ENCODE measurements at regions of chr2 and their contacts with region 1.

Region 1: DNA sequence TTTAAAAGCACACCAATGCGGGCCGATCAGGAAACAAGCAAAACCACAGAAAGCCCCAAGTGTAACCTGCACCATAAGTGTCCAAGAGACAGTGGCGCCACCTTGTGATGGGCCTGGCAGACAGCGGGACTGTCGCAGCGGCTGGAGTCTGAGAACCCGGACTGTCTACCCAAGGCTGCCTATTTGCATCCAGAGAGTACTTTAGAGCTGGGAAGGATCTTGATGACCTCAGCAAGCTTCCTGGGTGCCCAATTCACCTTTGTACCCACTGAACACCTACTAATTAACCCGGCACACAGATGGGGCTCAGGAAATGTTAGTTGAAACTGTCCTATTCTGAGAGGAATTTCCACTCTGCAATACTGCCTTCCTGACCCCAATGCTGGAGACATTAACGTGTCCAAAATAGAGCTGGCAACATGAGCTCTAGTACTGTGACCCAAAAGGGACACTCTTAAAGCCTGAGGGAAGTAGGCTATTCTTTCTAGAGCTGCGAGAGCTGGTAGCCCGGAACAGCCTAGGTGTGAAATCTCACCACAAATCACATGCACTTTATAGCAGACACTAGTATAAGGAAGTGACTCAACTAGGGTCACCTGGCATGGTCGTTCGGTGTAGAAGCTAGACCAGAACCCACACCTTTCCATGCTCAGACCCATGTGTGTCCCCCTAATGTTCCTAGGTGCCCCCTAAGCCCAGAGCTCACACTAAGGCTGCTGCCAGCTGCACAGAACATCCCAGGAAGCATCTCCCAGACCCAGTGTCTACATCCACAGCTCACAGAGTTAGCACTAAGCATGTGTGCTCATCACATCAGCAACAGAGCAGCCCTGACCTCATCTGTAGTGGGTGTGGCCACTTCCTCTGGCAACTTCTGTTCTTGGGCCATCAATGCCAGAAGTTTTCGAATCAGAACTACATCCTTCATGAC is 25.4 kb downstream of the POLR1A start:
- DNase-seq: peak; percentile 96
- H3K4me3 ChIP-seq: peak overlapping the region in 1 of 8 donors; percentile 5
- H3K27ac ChIP-seq: peak overlapping the region; percentile 24 to 82 (median 66)
- H3K4me1 ChIP-seq: peaks cover 20 to 48% (median 37%) of the 10 kb centered on the region in 6 donors
- H3K27me3 ChIP-seq: no peaks in the 10 kb centered on the region
- CTCF ChIP-seq: peak; percentile 59 to 90 (median 85)
- POLR2A ChIP-seq: no peak

Region 2: GRCh38 chr2:85728883-85729824 is 351.1 kb before region 1 on chr2:
- intact Hi-C with region 1: loop called (anchors 10 kb)
- DNase-seq: peak; percentile 95
- H3K4me3 ChIP-seq: peak overlapping the region in 1 of 8 donors; percentile 17
- H3K27ac ChIP-seq: peak overlapping the region in 1 of 8 donors; percentile 24
- H3K4me1 ChIP-seq: peaks cover 3 to 34% (median 18%) of the 10 kb centered on the region in 6 donors
- H3K27me3 ChIP-seq: peaks cover 0 to 26% (median 0%) of the 10 kb centered on the region in 7 donors
- CTCF ChIP-seq: peak; percentile 65 to 95 (median 89)
- POLR2A ChIP-seq: no peak

Region 3: DNA sequence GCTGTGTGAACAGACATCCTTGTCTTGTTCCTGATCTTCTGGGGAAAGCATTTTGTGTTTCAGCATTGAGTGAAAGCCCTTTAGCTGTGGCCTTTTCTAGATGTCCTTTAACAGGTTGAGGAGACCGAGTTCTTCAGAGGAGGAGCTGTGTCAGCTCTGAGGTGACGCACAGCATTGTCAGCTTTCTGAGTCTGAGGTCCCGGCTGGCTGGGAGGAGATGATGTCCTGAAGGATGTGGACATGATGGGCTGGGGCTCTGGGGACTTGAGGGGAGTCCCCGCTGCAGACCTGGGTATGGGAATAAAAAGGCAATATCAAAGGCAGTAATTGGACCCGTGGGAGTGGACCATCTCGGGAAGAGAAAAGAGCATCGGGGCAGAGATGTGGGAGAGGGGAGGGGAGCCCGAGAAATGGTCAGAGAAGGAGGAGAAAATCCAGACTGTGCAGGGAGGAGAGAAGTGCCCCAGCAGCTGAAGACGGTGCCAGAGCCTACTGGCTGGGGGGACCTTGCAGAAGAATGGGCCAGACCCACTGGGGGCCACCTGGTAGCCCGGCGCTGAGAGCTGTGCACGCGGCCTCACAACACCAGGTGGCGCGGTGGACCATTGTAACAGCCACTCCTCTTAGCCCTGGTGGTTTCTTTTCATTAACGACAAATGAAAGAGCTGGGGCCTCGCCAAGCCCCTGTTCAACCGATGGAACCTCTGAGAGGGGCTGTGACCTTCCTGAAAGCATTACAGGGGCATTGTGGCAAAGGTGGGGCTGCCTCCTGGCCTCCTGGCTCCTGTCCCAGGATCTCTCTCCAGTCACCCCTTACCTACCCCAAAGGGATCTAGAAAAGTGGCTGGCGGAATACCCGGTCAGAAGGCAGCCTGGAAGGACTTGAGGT is 253.0 kb before region 1 on chr2:
- intact Hi-C with region 1: loop called (anchors 2 kb)
- DNase-seq: peak; percentile 93
- H3K4me3 ChIP-seq: peak overlapping the region in 1 of 8 donors; percentile 34
- H3K27ac ChIP-seq: peak overlapping the region in 1 of 8 donors; percentile 24
- H3K4me1 ChIP-seq: peaks cover 0 to 18% (median 8%) of the 10 kb centered on the region in 6 donors
- H3K27me3 ChIP-seq: peaks cover 0 to 5% (median 0%) of the 10 kb centered on the region in 7 donors
- CTCF ChIP-seq: peak; percentile 85 to 96 (median 93)
- POLR2A ChIP-seq: no peak

Region 4: DNA sequence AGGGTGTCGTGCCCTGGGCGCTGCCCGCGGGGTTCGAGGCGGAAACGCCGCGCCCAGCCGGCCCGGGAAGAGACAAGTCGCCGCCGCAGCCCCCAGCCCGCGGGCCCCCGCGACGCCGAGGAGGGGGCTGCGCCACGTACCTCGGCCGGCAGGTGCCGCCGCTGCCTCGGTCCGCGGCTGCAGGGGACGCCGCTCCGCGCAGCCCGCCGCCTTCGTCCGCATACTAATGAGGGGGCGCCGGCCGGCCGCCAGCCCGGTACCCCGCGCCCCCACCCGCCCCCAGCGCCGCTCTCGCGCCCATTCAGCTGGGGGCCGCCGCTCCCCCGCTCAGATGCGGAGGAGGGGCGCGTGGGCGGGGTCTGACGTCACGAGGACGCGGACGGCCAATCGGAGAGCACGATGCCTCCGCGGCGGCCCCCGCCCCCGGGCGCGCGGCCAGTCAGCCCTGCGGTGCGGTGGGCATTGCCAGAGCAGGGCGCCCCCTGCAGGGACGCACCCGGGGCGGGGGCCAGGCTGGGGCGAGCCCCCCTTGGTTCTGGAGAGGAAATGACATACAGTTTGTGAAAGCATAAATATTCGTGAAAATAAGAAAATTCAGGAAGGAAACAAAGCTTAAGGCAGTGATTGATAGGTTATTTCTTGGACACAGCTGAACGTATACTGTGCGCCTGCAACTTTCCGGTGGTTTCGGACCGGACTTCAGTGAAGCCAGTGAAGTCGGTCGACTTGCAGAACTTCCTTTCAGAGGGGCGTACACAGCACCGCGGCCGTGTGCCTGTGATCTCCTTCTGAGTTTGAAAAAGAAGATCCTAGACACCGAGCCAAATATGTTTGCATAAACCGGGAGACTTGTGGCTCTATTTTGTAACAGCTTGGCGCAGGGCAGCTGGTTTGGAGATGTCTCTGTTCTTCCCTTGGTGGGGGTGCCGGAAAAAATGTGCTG is 191.3 kb before region 1 on chr2 and contains the start of gene ST3GAL5:
- intact Hi-C with region 1: loop called (anchors 5 kb)
- DNase-seq: peak; percentile 97
- H3K4me3 ChIP-seq: peak within 1 kb of the TSS; percentile 65 to 95 (median 86)
- H3K27ac ChIP-seq: peak within 1 kb of the TSS; percentile 88 to 96 (median 91)
- H3K4me1 ChIP-seq: peaks cover 37 to 93% (median 82%) of the 10 kb centered on the region in 6 donors
- H3K27me3 ChIP-seq: peaks cover 0 to 8% (median 0%) of the 10 kb centered on the region in 7 donors
- CTCF ChIP-seq: peak; percentile 59 to 91 (median 82)
- POLR2A ChIP-seq: peak in 2 of 3 donors; percentile 8 to 82
- total RNA-seq, gene ST3GAL5: 55.8 to 124 (median 74.9) TPM

Region 5: DNA sequence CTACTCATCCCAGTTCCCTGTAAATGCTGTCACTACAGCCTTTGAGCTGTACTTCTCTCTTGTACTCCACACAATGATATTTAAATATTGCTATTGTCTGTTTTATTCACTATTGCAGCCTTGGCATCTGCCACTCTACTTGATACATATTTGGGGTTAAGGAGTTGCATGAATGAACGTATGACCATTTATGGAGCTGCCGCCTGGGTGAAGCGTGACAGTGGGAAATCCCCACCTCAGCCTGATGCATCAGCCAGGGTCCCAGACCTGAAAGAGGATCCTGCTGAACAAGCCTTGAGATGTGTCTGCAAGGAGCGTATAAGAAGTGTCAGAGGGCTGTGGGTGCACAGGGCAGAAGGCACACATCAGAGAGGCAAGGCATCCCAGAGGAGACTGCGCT is 158.1 kb after region 1 on chr2:
- intact Hi-C with region 1: no loop called
- DNase-seq: peak; percentile 82
- H3K4me3 ChIP-seq: no peak overlapping the region
- H3K27ac ChIP-seq: no peak overlapping the region
- H3K4me1 ChIP-seq: peaks cover 0 to 49% (median 16%) of the 10 kb centered on the region in 6 donors
- H3K27me3 ChIP-seq: no peaks in the 10 kb centered on the region
- CTCF ChIP-seq: no peak
- POLR2A ChIP-seq: no peak

Region 6: GRCh38 chr2:86562922-86563649 is 482.8 kb after region 1 on chr2 and contains the start of gene CHMP3:
- intact Hi-C with region 1: no loop called
- DNase-seq: peak; percentile 99
- H3K4me3 ChIP-seq: peak within 1 kb of the TSS; percentile 57 to 81 (median 59)
- H3K27ac ChIP-seq: peak within 1 kb of the TSS; percentile 99 to 100 (median 100)
- H3K4me1 ChIP-seq: peaks cover 12 to 49% (median 32%) of the 10 kb centered on the region in 6 donors
- H3K27me3 ChIP-seq: no peaks in the 10 kb centered on the region
- CTCF ChIP-seq: no peak
- POLR2A ChIP-seq: peak; percentile 29 to 82 (median 61)
- total RNA-seq, gene CHMP3: 68.2 to 125 (median 90.1) TPM